Activated CD8-positive, alpha-beta T cell treated with anti-CD3 and anti-CD28 coated beads, Interleukin-2, amount 10 ng/mL, durations not matched to agents 7 days and 5 days (primary cell): ENCODE measurements at regions of chr14 and their contacts with region 1.

Region 1: DNA sequence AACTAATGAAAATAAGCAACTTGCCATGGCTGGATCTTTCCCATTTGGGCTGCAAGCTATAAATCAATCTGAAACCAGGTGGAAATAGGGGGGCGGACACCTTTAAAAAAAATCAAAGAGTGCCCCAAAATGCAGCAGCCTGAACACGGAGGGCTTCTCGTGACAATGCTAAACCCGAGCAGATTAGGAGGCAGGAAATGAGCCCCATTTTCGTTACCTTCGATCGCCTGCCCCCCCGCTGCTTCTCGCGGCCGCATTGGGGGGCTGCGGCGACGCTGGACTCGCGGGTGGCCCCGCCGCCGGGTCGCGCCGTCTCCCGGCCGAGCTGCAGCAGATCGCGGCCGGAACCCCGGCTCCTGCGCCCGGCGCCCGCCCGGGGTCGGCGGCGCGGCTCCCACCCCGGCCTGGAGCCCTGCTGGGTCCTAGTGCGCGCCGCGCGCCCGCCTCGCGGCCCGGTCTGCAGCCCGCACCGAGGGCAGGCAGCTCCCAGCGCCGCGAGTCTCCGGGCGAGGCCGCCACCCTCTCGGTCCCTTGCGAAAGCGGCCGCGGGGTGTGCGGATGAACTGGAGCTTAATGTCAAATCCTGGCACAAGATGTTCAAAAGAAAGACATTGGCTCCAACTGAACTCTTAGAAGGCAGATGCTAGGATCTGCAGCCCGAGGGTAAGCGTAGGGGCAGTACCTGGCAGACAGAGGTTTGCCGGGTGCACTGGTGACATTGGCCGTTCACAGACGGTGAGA is 201.9 kb upstream of the FOXN3 start:
- DNase-seq: peak; percentile 82
- ATAC-seq: peak; percentile 70
- H3K4me3 Mint-ChIP-seq: peak overlapping the region; percentile 91
- H3K27ac Mint-ChIP-seq: peak overlapping the region; percentile 97
- H3K4me1 Mint-ChIP-seq: peaks cover 61% of the 10 kb centered on the region
- H3K27me3 Mint-ChIP-seq: no peaks in the 10 kb centered on the region

Region 2: GRCh38 chr14:89430391-89431236 is 188.4 kb before region 1 on chr14:
- CTCF ChIA-PET with region 1: interaction called, 3 read pairs
- POLR2A ChIA-PET with region 1: interaction called, 29 read pairs
- DNase-seq: peak; percentile 61
- ATAC-seq: peak; percentile 74
- H3K4me3 Mint-ChIP-seq: peak overlapping the region; percentile 70
- H3K27ac Mint-ChIP-seq: peak overlapping the region; percentile 95
- H3K4me1 Mint-ChIP-seq: peaks cover 75% of the 10 kb centered on the region
- H3K27me3 Mint-ChIP-seq: no peaks in the 10 kb centered on the region

Region 3: DNA sequence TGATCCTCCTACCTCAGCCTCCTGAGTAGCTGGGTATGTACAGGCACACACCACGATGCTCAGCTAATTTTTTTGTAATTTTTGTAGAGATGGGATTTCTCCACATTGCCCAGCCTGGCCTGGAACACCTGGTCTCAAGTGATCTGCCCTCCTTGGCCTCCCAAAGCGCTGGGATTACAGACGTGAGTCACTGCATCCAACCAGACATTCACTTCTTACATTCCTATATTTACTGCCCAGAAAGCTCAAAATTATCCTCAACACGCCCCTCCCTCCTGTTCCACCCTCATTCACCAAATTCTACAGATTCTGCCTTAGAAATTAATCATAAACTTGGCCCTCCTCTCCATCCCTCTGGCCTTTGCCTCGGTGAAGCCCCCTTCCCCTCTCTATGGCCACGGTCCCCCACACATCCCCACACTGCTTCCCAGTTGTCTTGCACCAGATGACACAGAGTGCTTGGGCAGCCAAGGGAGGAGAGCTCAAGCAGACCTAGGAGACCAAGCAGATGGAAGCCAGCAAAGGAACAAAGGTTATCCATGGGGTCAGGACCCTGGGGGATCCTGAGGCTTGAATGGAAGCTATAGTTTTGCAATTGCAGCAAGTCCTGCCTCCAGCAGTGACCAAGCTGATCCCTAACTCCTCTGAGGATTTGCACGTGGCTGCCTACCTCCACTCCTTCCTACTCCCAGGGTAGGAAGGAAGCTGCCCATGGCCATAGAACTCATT is 11.3 kb after region 1 on chr14:
- CTCF ChIA-PET with region 1: interaction called, 3 read pairs
- POLR2A ChIA-PET with region 1: interaction called, 18 read pairs
- DNase-seq: no peak
- ATAC-seq: no peak
- H3K4me3 Mint-ChIP-seq: no peak overlapping the region
- H3K27ac Mint-ChIP-seq: peak overlapping the region; percentile 17
- H3K4me1 Mint-ChIP-seq: peaks cover 45% of the 10 kb centered on the region
- H3K27me3 Mint-ChIP-seq: no peaks in the 10 kb centered on the region

Region 4: DNA sequence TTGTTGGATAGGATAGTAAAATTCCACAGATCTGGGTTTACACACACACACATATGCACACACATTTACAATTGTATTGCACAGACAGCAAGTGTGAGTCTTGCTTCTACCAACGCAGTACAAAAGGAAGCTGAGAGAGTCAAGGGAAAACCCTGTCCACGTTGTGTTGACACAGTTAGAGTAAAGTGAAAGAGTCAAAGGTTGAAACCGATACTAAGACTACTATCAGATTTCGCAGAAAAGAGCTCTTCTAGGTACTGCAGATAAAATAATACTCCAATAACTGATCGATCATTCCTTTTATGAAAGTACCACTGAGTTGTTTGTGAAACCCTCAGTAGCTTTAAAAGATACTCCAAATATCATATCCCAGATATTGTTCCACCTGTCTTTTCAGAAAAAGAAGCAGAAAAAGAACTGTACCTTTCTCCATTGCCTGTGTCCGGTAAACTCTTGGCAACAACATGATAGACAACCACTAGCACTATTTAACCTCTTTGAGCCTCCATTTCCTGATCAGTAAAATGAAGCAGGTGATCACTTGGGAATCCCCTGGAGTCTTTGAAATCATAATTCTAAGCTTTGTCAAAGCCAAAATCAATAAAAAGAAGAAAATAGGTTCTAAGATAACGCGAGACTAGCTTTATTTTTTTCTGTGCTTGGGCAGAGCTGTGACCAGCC is 22.7 kb after region 1 on chr14:
- CTCF ChIA-PET with region 1: interaction called, 11 read pairs
- POLR2A ChIA-PET with region 1: interaction called, 48 read pairs
- DNase-seq: peak; percentile 53
- ATAC-seq: peak; percentile 92
- H3K4me3 Mint-ChIP-seq: peak overlapping the region; percentile 67
- H3K27ac Mint-ChIP-seq: peak overlapping the region; percentile 92
- H3K4me1 Mint-ChIP-seq: peaks cover 57% of the 10 kb centered on the region
- H3K27me3 Mint-ChIP-seq: no peaks in the 10 kb centered on the region

Region 5: GRCh38 chr14:89652352-89652751 is 33.4 kb after region 1 on chr14:
- CTCF ChIA-PET with region 1: no interaction called
- POLR2A ChIA-PET with region 1: no interaction called
- DNase-seq: no peak
- ATAC-seq: no peak
- H3K4me3 Mint-ChIP-seq: no peak overlapping the region
- H3K27ac Mint-ChIP-seq: no peak overlapping the region
- H3K4me1 Mint-ChIP-seq: peaks cover 14% of the 10 kb centered on the region
- H3K27me3 Mint-ChIP-seq: no peaks in the 10 kb centered on the region

Region 6: DNA sequence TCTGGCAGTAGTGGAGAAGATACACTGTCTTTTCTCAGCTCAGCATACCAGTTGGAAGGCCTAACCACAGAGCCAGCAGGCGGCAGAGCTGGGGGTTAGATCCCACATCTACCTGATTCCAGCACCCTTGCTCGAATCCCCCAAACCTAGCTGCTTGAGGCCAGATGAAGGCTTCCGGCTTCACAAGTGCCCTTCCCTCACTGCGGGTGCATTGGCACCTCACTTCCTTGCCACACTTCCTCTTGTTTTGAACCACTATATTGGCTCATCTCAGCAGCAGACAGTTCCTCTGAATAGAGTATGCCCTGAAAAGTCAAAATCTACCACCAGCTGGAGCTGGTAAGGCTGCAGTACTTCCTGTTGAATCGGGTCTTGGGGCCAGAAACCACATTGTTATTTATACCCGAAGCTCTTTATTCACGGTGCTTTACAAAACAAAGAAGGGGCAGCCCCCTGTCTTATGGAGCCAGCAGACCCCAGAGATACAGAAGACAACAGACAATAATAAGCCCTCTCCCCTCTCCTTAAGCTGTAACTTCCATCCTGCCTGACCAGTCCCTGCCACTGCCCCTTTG is 101.8 kb after region 1 on chr14:
- CTCF ChIA-PET with region 1: interaction called, 11 read pairs
- POLR2A ChIA-PET with region 1: interaction called, 39 read pairs
- DNase-seq: peak; percentile 88
- ATAC-seq: peak; percentile 86
- H3K4me3 Mint-ChIP-seq: peak overlapping the region; percentile 62
- H3K27ac Mint-ChIP-seq: peak overlapping the region; percentile 96
- H3K4me1 Mint-ChIP-seq: peaks cover 78% of the 10 kb centered on the region
- H3K27me3 Mint-ChIP-seq: no peaks in the 10 kb centered on the region

Region 7: DNA sequence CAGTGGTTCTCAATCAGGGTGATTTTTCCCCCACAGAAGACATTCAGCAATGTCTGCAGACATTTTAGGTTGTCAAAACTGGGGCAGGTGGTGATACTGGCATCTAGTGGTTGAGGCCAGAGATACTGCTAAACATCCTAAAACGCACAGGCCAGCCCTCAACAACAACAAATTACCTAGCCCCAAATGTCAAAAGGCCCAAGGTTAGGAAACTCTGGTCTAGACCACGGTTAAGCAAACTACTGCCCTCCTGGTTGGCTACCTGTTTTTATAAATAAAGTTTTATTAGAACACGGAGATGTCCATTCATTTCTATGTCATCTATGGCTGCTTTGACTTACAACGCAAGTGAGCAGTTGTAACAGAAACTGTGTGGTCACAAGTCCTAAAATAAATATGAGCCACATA is 148.9 kb after region 1 on chr14:
- CTCF ChIA-PET with region 1: interaction called, 14 read pairs
- POLR2A ChIA-PET with region 1: interaction called, 4 read pairs
- DNase-seq: peak; percentile 82
- ATAC-seq: peak; percentile 93
- H3K4me3 Mint-ChIP-seq: peak overlapping the region; percentile 10
- H3K27ac Mint-ChIP-seq: peak overlapping the region; percentile 85
- H3K4me1 Mint-ChIP-seq: peaks cover 39% of the 10 kb centered on the region
- H3K27me3 Mint-ChIP-seq: peaks cover 5% of the 10 kb centered on the region

Region 8: GRCh38 chr14:89922031-89922907 is 303.3 kb after region 1 on chr14:
- CTCF ChIA-PET with region 1: no interaction called
- POLR2A ChIA-PET with region 1: no interaction called
- DNase-seq: no peak
- ATAC-seq: no peak
- H3K4me3 Mint-ChIP-seq: no peak overlapping the region
- H3K27ac Mint-ChIP-seq: no peak overlapping the region
- H3K4me1 Mint-ChIP-seq: no peaks in the 10 kb centered on the region
- H3K27me3 Mint-ChIP-seq: no peaks in the 10 kb centered on the region